Heart right ventricle (tissue), 16 donors: ENCODE measurements at regions of chr9 and their contacts with region 1.

Region 1: GRCh38 chr9:121074635-121075385 is at the start of gene CNTRL:
- DNase-seq: peak; percentile 87 to 92
- ATAC-seq: peak; percentile 93 to 96 (median 96)
- H3K4me3 ChIP-seq: peak within 1 kb of the TSS; percentile 40 to 93 (median 78)
- H3K27ac ChIP-seq: peak within 1 kb of the TSS; percentile 71 to 94 (median 88)
- H3K4me1 ChIP-seq: peaks cover 0 to 45% (median 19%) of the 10 kb centered on the region in 9 donors
- H3K27me3 ChIP-seq: no peaks in the 10 kb centered on the region
- CTCF ChIP-seq: peak in 1 of 9 donors; percentile 2
- total RNA-seq, gene CNTRL: 3.6 to 7.5 (median 4.2) TPM

Region 2: DNA sequence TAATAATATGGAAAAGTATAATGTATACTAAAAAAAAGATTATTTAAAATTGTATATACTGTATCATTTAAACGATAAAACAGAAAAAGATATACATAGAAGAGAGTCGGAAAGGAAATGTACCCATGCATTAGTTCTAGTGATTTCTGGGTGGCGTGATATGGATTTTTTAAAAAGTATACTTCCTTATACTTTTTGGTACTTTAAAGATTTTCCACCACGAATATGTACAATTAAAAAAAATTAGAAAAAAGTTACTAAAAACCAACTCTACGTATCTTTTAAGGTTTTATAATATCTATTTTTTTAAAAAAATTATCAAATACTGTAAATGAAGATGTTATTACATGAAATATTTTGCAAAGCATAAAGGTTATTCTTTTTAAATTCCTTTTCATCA is 210.1 kb before region 1 on chr9:
- intact Hi-C with region 1: no loop called
- DNase-seq: no peak
- ATAC-seq: no peak
- H3K4me3 ChIP-seq: no peak overlapping the region
- H3K27ac ChIP-seq: no peak overlapping the region
- H3K4me1 ChIP-seq: peaks cover 0 to 17% (median 9%) of the 10 kb centered on the region in 9 donors
- H3K27me3 ChIP-seq: no peaks in the 10 kb centered on the region
- CTCF ChIP-seq: no peak

Region 3: GRCh38 chr9:121121582-121122087 is 46.8 kb after region 1 on chr9:
- intact Hi-C with region 1: loop called in 1 of 10 experiments (anchors 2 kb)
- DNase-seq: peak; percentile 96 to 98
- ATAC-seq: peak; percentile 100
- H3K4me3 ChIP-seq: peak overlapping the region; percentile 4 to 64 (median 48)
- H3K27ac ChIP-seq: peak overlapping the region in 9 of 10 donors; percentile 11 to 84 (median 52)
- H3K4me1 ChIP-seq: peaks cover 0 to 29% (median 13%) of the 10 kb centered on the region in 9 donors
- H3K27me3 ChIP-seq: no peaks in the 10 kb centered on the region
- CTCF ChIP-seq: peak in 8 of 9 donors; percentile 10 to 57 (median 43)